Naive thymus-derived CD4-positive, alpha-beta T cell (primary cell): ENCODE measurements at regions of chr1 and their contacts with region 1.

Region 1: GRCh38 chr1:33127001-33127791 is 46.2 kb downstream of the AZIN2 start:
- DNase-seq: peak; percentile 93 to 99 (median 98)
- ATAC-seq: peak; percentile 95
- H3K4me3 ChIP-seq: peak overlapping the region; percentile 95
- H3K4me3 Mint-ChIP-seq: peak overlapping the region; percentile 87 to 99 (median 93)
- H3K27ac ChIP-seq: peak overlapping the region; percentile 88
- H3K27ac Mint-ChIP-seq: peak overlapping the region; percentile 91 to 99 (median 96)
- H3K4me1 ChIP-seq: peaks cover 19 to 28% of the 10 kb centered on the region in 2 donors
- H3K4me1 Mint-ChIP-seq: peaks cover 24 to 60% (median 52%) of the 10 kb centered on the region in 7 donors
- H3K27me3 ChIP-seq: no peaks in the 10 kb centered on the region
- H3K27me3 Mint-ChIP-seq: peaks cover 0 to 3% (median 0%) of the 10 kb centered on the region in 5 donors

Region 2: DNA sequence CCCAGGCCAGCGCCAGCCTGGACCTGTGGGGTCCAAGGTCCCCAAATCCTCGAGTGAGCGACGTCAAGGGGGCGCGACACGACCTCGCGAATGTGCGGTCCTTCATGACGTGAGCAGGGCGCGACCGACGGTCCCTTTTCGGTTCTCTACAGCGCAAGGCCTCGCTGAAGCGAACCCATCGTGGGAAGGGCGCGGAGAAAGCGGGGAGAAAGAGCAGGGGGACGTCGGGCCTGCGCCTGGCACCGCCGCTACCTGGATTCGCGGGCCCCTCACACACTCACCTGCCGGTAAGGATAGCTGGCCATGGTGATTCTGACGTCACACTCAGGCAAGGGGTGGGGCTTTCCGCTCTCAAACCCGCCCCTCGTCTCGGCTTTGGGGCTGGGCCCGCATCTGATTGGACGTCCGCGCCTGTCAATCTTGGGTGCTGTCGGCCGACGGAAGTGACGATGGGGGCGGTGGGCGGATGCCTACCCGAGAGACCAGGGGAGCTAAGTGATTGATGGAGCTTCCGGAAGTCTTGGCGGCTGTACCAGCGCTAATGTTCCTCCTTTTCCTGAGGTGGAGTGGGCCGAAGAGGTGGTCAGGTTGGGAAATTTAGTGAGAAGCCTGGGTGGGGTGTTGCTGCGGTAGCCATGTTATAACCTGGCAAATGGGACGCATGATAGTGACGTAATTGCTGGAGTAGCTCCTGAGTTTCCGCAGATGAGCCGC is 1482.5 kb before region 1 on chr1 and contains the start of gene PEF1:
- CTCF ChIA-PET with region 1: interaction called, 4 read pairs
- POLR2A ChIA-PET with region 1: no interaction called
- intact Hi-C with region 1: loop called in 1 of 2 experiments (anchors 5 kb)
- DNase-seq: peak; percentile 97 to 100 (median 99)
- ATAC-seq: peak; percentile 94
- H3K4me3 ChIP-seq: peak within 1 kb of the TSS; percentile 91
- H3K4me3 Mint-ChIP-seq: peak within 1 kb of the TSS; percentile 92 to 100 (median 98)
- H3K27ac ChIP-seq: peak within 1 kb of the TSS; percentile 98
- H3K27ac Mint-ChIP-seq: peak within 1 kb of the TSS; percentile 98 to 100 (median 99)
- H3K4me1 ChIP-seq: peaks cover 27 to 30% of the 10 kb centered on the region in 2 donors
- H3K4me1 Mint-ChIP-seq: peaks cover 18 to 47% (median 40%) of the 10 kb centered on the region in 7 donors
- H3K27me3 ChIP-seq: no peaks in the 10 kb centered on the region
- H3K27me3 Mint-ChIP-seq: no peaks in the 10 kb centered on the region
- total RNA-seq, gene PEF1: 37.7 to 49.8 (median 40.8) TPM

Region 3: GRCh38 chr1:32964461-32965250 is 162.5 kb before region 1 on chr1 and contains the start of gene RNF19B:
- CTCF ChIA-PET with region 1: no interaction called
- POLR2A ChIA-PET with region 1: interaction called, 14 read pairs
- intact Hi-C with region 1: loop called (anchors 1 kb)
- DNase-seq: peak; percentile 85 to 94 (median 90)
- ATAC-seq: peak; percentile 97
- H3K4me3 ChIP-seq: peak within 1 kb of the TSS; percentile 67
- H3K4me3 Mint-ChIP-seq: peak within 1 kb of the TSS; percentile 88 to 93 (median 91)
- H3K27ac ChIP-seq: peak within 1 kb of the TSS; percentile 74
- H3K27ac Mint-ChIP-seq: peak within 1 kb of the TSS; percentile 71 to 96 (median 90)
- H3K4me1 ChIP-seq: peaks cover 19 to 24% of the 10 kb centered on the region in 2 donors
- H3K4me1 Mint-ChIP-seq: peaks cover 23 to 50% (median 37%) of the 10 kb centered on the region in 7 donors
- H3K27me3 ChIP-seq: no peaks in the 10 kb centered on the region
- H3K27me3 Mint-ChIP-seq: peaks cover 0 to 3% (median 0%) of the 10 kb centered on the region in 5 donors
- total RNA-seq, gene RNF19B: 17.1 to 58.1 (median 39.2) TPM

Region 4: DNA sequence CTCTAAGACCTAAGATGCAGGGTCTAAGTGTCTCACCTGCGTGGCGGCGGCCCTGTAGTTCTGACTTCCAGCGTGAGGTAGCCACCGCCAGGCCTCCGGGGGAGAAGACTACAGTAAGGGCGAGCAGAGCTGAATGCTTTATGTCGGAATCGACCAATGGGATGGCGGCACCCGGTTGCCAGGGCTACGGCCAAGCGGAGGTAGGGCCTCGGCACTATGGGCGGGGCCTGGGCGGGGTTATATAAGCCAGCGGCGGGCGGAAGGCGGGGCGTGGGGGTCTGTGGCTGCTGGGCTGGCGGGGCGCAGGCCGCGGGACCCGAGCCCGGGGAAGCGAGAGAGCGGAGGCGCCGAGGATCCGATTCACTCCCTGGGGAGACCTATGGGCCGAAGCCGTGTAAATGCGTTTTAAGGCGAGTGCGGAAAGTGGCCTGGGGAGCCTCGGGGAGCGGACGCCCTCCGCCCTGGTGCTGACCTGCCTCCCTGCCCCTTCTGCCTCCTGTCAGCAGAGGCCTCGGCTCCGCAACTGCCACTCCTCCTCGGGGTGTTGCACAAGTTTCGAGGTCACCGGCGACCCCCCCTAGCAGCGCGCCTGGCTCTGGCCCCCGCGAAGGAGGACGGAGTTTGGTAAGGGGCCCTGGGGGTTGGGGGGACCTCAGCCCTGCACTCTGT is 46.2 kb before region 1 on chr1 and contains the start of gene AZIN2:
- CTCF ChIA-PET with region 1: interaction called, 4 read pairs
- POLR2A ChIA-PET with region 1: interaction called, 24 read pairs
- intact Hi-C with region 1: loop called (anchors 1 kb)
- DNase-seq: peak; percentile 94 to 99 (median 95)
- ATAC-seq: peak; percentile 99
- H3K4me3 ChIP-seq: peak within 1 kb of the TSS; percentile 68
- H3K4me3 Mint-ChIP-seq: peak within 1 kb of the TSS; percentile 81 to 88 (median 86)
- H3K27ac ChIP-seq: peak within 1 kb of the TSS; percentile 66
- H3K27ac Mint-ChIP-seq: peak within 1 kb of the TSS; percentile 6 to 91 (median 72)
- H3K4me1 ChIP-seq: peaks cover 14 to 15% of the 10 kb centered on the region in 2 donors
- H3K4me1 Mint-ChIP-seq: peaks cover 20 to 40% (median 35%) of the 10 kb centered on the region in 7 donors
- H3K27me3 ChIP-seq: no peaks in the 10 kb centered on the region
- H3K27me3 Mint-ChIP-seq: peaks cover 0 to 30% (median 0%) of the 10 kb centered on the region in 5 donors
- total RNA-seq, gene AZIN2: 5.3 to 9.6 (median 9.0) TPM

Region 5: DNA sequence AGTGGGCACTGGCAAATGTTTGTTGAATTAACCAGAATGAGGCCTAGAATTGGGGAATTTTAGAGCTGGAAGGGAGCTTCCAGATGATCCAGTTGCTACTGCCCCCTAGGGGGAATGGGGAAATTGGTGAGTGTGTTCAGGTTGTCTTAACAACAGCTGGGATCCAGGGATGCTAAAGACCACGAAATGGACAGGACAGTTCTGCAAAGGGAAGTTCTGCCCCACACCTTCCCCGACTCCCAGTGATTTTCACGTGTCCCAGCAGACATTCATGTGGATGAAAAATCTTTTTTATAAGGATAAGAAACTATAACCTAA is 20.8 kb after region 1 on chr1:
- CTCF ChIA-PET with region 1: interaction called, 3 read pairs
- POLR2A ChIA-PET with region 1: interaction called, 3 read pairs
- intact Hi-C with region 1: loop called in 1 of 2 experiments (anchors 2 kb)
- DNase-seq: peak in 2 of 9 donors; percentile 12 to 14
- ATAC-seq: no peak
- H3K4me3 ChIP-seq: no peak overlapping the region
- H3K4me3 Mint-ChIP-seq: no peak overlapping the region
- H3K27ac ChIP-seq: no peak overlapping the region
- H3K27ac Mint-ChIP-seq: peak overlapping the region in 2 of 9 donors; percentile 30 to 76
- H3K4me1 ChIP-seq: no peaks in the 10 kb centered on the region
- H3K4me1 Mint-ChIP-seq: peaks cover 0 to 10% (median 4%) of the 10 kb centered on the region in 7 donors
- H3K27me3 ChIP-seq: no peaks in the 10 kb centered on the region
- H3K27me3 Mint-ChIP-seq: no peaks in the 10 kb centered on the region

Region 6: DNA sequence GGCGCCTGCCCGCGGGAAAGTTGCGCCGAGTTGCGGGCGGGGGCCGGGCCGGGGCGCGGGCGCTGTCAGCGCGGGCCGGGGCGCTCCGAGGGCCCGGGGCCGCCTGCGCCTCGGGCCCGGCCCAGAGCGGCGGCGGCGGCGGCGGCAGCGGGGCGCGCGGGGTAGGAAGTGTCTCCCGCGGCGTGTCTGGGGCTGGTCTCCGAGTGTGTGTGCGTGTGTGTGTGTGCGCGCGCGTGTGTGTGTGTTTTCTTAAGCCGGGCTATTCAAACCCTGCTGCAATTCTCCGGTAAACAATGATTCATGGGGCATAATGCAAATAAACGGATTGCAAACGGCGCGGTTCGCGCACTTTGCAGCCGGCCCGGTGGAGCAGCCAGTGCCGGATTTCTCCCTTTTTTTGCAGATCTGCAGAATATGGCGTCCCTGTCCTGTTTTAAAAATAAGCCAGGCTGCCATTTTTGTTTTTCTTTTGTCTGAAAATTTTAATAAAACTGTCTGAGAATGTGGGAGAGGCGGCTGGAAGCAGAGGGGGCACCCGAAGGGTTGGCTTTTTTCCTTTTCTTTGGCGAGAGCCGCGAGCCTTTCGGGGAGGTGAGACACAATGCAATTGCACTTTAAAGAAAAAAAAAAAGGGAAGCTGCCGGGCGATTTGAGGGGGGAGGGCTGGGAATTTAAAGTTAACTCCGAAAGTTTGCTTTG is 129.7 kb after region 1 on chr1:
- CTCF ChIA-PET with region 1: no interaction called
- POLR2A ChIA-PET with region 1: interaction called, 9 read pairs
- intact Hi-C with region 1: loop called (anchors 1 to 2 kb)
- DNase-seq: peak in 8 of 9 donors; percentile 41 to 68 (median 62)
- ATAC-seq: peak; percentile 80
- H3K4me3 ChIP-seq: peak overlapping the region; percentile 84
- H3K4me3 Mint-ChIP-seq: peak overlapping the region; percentile 97 to 100 (median 99)
- H3K27ac ChIP-seq: peak overlapping the region; percentile 74
- H3K27ac Mint-ChIP-seq: peak overlapping the region; percentile 97 to 99 (median 98)
- H3K4me1 ChIP-seq: peaks cover 16 to 31% of the 10 kb centered on the region in 2 donors
- H3K4me1 Mint-ChIP-seq: peaks cover 29 to 47% (median 42%) of the 10 kb centered on the region in 7 donors
- H3K27me3 ChIP-seq: no peaks in the 10 kb centered on the region
- H3K27me3 Mint-ChIP-seq: peaks cover 0 to under 1% (median 0%) of the 10 kb centered on the region in 5 donors